ENCODE measurements at regions of chr10 and their contacts with region 1.

Region 1: DNA sequence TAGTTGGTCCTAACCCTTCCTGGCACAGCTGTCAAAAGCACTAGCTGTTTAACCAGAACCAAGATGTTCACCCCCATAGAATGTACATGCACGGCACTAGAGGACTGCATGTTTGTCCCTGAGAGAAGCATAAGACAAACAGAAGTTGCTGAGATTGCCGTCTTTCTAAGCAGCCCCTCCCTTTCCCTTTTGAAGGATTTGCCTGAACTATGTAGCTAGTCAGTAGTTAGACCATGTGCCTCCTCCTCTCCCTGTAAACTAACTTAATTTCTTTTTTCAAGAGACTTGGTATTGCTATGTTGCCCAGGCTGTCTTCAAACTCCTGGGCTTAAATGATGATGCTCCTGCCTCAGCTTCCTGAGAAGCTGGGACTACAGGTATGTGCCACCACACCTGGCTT is 40.7 kb downstream of the TBC1D12 start:
- DNase-seq: no peak
- ATAC-seq: no peak
- H3K4me3 ChIP-seq: no peak overlapping the region
- H3K27ac ChIP-seq: no peak overlapping the region
- H3K4me1 ChIP-seq: peaks cover 8% of the 10 kb centered on the region
- H3K27me3 ChIP-seq: no peaks in the 10 kb centered on the region
- CTCF ChIP-seq: no peak
- POLR2A ChIP-seq: no peak

Region 2: DNA sequence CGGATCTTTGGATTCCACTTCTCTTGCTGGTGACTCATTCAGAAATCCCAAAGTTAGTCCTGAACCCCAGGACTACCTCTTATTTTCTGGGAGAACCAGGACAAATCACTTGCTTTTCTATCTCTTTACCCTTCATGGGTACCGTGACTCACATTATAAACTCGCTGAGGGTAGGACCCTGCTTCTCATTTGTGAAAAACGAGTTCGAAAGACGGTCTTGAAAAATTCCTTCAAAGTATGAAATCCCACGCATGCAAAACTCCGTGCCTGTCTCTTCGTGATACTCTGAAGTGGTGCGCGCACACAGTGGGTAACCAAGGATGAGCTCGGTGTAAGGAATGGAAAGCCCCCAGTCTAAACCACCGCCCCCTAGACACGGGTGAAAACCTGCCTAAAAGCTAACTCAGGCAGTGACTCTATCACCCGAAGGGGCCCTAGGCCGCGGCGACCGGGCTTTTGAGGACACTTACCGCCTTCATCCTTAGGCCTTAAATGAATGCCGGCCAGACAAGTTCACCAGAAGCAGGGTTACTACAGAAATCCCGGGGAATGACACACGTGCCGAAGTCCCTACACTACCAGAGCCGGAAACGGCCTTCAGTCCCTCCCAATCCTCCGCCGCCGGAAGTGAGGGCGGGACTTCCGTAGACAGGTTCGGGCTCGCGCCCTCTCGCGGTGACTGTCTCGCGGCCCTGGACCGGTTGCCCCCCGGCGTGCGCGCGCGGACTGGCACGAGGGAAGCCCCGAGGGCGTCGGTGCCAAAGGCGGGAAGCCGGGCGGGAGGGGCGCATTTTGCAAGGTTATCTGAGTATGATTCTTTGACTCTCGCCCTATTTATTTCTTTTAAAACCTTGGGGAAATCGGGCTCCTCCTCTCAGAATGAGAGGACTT is 80.4 kb before region 1 on chr10 and contains the start of gene NOC3L:
- intact Hi-C with region 1: loop called (anchors 10 kb)
- DNase-seq: peak; percentile 95 to 97 (median 96)
- ATAC-seq: peak; percentile 100
- H3K4me3 ChIP-seq: peak within 1 kb of the TSS; percentile 42 to 56
- H3K27ac ChIP-seq: peak within 1 kb of the TSS; percentile 51 to 72 (median 60)
- H3K4me1 ChIP-seq: peaks cover 11% of the 10 kb centered on the region
- H3K27me3 ChIP-seq: no peaks in the 10 kb centered on the region
- CTCF ChIP-seq: peak; percentile 80 to 99 (median 85)
- POLR2A ChIP-seq: peak in 2 of 3 donors; percentile 51 to 64
- total RNA-seq, gene NOC3L: 13.5 to 14.8 TPM

Region 3: GRCh38 chr10:94583124-94583523 is 140.1 kb after region 1 on chr10:
- intact Hi-C with region 1: no loop called
- DNase-seq: no peak
- ATAC-seq: no peak
- H3K4me3 ChIP-seq: no peak overlapping the region
- H3K27ac ChIP-seq: no peak overlapping the region
- H3K4me1 ChIP-seq: peaks cover 11% of the 10 kb centered on the region
- H3K27me3 ChIP-seq: no peaks in the 10 kb centered on the region
- CTCF ChIP-seq: no peak
- POLR2A ChIP-seq: no peak

Region 4: DNA sequence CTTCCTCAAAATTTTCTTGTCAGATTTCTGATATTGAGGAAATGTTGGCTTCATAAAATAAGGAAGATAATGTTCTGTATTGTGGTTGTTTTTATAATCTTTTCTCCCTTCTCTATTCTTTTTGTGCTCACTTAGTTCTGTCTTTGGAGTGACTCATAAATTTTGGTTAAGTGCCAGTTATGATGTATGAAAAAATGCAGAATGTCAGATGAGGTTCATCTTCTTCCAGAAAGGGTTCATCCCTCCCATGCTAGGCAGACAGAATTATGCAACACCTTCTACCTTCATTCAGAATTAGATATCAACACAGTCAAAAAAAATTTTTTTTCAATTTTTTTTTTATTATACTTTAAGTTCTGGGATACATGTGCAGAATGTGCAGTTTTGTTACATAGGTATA is 282.8 kb after region 1 on chr10:
- intact Hi-C with region 1: no loop called
- DNase-seq: no peak
- ATAC-seq: no peak
- H3K4me3 ChIP-seq: no peak overlapping the region
- H3K27ac ChIP-seq: no peak overlapping the region
- H3K4me1 ChIP-seq: no peaks in the 10 kb centered on the region
- H3K27me3 ChIP-seq: no peaks in the 10 kb centered on the region
- CTCF ChIP-seq: no peak
- POLR2A ChIP-seq: no peak

Measured in body of pancreas (tissue), 4 donors.